PC-3 (cell line): ENCODE measurements at regions of chr3 and their contacts with region 1.

Region 1: DNA sequence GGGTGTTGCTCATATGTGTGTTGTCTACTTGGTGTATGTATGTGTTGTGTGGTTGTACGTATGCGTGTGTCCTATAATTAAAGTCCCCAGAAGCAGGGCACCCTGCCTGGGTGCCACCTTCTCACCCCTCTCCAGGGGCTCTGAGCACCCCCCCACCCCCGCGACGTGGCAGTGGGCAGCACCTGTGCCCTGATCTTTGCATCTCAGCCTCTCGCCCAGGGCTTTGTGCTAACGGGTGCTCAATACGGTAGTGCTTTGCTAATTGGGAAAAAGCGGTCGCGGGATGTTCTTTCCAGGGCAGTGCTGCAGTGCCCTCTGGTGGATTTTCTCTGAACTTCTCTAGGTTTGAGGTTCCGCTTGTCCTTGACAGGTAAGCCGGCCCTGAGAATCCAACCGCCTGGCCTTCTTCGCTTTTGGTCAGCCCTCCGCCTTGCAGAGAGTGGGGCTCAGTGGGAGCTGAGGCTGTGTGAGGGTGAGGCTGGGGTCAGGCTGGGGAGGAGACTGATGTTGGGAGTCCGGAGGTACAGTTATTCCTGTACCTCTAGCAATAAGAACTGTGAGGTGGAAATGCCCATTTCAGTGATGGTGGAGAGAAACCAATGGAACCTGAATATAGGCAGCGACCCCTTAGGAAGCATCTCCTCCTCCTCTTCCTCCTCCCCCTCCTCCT is 17.6 kb upstream of the EPHB3 start:
- DNase-seq: peak; percentile 96
- ATAC-seq: peak; percentile 85
- H3K4me3 ChIP-seq: no peak overlapping the region
- H3K27ac ChIP-seq: no peak overlapping the region
- H3K4me1 ChIP-seq: no peaks in the 10 kb centered on the region
- H3K27me3 ChIP-seq: peaks cover 23% of the 10 kb centered on the region
- CTCF ChIP-seq: peak; percentile 89

Region 2: GRCh38 chr3:183895296-183895695 is 648.7 kb before region 1 on chr3:
- CTCF ChIA-PET with region 1: no interaction called
- POLR2A ChIA-PET with region 1: no interaction called
- intact Hi-C with region 1: loop called (anchors 5 kb)
- DNase-seq: peak; percentile 71
- ATAC-seq: peak; percentile 67
- H3K4me3 ChIP-seq: no peak overlapping the region
- H3K27ac ChIP-seq: no peak overlapping the region
- H3K4me1 ChIP-seq: no peaks in the 10 kb centered on the region
- H3K27me3 ChIP-seq: no peaks in the 10 kb centered on the region
- CTCF ChIP-seq: peak; percentile 88

Region 3: GRCh38 chr3:184417619-184418327 is 126.2 kb before region 1 on chr3:
- CTCF ChIA-PET with region 1: interaction called, 3 read pairs
- POLR2A ChIA-PET with region 1: no interaction called
- intact Hi-C with region 1: loop called (anchors 1 kb)
- DNase-seq: peak; percentile 69
- ATAC-seq: peak; percentile 96
- H3K4me3 ChIP-seq: no peak overlapping the region
- H3K27ac ChIP-seq: no peak overlapping the region
- H3K4me1 ChIP-seq: no peaks in the 10 kb centered on the region
- H3K27me3 ChIP-seq: 0 out of 2 replicates have a peak, but pooled peaks cover 2% of the 10 kb centered on the region
- CTCF ChIP-seq: peak; percentile 89

Region 4: GRCh38 chr3:184469423-184469822 is 74.6 kb before region 1 on chr3:
- CTCF ChIA-PET with region 1: interaction called, 6 read pairs
- POLR2A ChIA-PET with region 1: no interaction called
- intact Hi-C with region 1: loop called (anchors 1 kb)
- DNase-seq: peak; percentile 66
- ATAC-seq: peak; percentile 85
- H3K4me3 ChIP-seq: no peak overlapping the region
- H3K27ac ChIP-seq: no peak overlapping the region
- H3K4me1 ChIP-seq: no peaks in the 10 kb centered on the region
- H3K27me3 ChIP-seq: peaks cover 36% of the 10 kb centered on the region
- CTCF ChIP-seq: peak; percentile 93

Region 5: DNA sequence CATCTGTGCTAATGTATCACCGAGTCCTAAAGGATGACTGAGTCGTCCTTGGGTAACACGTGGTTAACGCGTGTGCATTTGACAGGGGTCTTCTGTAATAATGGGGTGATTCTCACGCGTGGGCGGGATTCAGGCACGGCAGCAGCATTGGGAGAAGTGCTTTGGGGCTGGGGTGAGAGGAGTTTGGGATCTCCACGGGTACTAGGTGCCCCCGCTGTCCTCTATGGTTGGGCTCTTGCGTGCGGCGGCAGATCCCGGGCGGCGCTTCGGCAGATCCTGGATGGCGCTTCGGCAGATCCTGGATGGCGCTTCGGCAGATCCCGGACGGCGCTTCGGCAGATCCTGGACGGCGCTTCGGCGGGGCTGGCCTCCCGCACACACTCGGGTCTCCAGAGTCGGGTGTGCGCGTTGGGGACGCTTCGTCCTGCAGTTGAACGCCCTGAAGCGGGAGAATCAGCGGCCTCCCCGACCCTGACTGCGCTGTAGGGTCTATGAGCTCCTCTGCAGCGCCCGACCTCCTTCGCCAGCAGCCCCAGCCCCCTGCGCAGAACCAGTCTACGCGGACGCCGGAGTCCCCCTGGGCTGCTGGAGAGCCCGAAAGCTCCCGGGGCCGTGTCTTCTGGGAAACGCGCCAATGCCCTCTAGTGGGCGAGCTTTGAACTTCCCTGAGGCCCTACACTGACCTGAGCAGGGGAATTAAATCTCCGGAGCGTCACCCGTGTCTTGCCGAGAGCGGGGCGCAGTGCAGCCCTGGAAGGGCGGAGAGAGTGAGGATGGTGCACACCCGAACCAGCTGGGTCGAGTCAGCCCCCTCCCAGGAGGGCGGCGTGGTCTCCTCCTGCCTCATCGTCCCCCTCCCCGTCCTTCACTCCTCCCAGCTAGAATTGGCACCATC is 30.5 kb before region 1 on chr3:
- CTCF ChIA-PET with region 1: interaction called, 3 read pairs
- POLR2A ChIA-PET with region 1: no interaction called
- intact Hi-C with region 1: loop called (anchors 1 kb)
- DNase-seq: peak; percentile 82
- ATAC-seq: peak; percentile 99
- H3K4me3 ChIP-seq: peak overlapping the region; percentile 60
- H3K27ac ChIP-seq: no peak overlapping the region
- H3K4me1 ChIP-seq: no peaks in the 10 kb centered on the region
- H3K27me3 ChIP-seq: peaks cover 96% of the 10 kb centered on the region
- CTCF ChIP-seq: peak; percentile 79